Cardiac septum (tissue), 1 donor: ENCODE measurements at regions of chr1 and their contacts with region 1.

Region 1: DNA sequence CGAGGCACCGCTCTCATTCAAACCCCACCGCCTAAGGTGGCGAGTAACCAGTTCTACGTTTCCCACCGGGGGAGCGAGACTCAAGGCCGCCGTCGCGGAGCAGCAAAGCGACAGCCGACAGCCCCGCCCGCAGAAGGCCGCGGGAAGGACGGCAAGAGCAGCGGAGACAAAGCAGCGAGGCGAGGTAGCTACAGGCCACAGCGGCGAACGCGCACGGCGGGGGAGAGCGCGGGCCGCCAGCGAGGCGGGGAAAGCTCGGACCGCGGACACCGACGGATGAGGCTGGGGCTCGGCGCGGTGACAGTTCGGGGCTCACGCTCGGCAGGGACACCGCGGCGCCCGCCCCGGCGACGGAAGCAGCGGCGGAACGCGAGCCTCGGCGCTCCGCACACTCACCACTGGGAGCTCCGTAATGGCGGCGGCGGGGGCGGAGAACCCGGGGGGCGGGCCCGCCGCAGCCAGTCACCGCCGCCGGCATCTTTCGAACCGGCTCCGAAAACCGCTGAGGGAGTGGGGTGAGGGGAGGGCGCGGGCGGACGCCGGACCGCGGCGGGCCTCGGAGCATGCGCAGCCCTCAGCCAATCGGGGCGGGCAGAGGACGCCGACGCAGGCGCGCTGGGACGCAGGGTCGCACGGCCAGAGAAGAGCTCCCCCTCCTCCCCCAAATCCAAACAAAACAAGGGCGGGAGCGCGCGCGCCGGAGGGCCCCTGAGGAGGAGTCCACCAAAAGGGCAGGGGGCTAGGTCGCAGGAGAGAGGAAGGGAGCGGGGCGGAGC is 666 bp downstream of the HP1BP3 start:
- DNase-seq: peak; percentile 98

Region 2: GRCh38 chr1:20767271-20767670 is 19.2 kb before region 1 on chr1:
- intact Hi-C with region 1: no loop called
- DNase-seq: no peak

Region 3: DNA sequence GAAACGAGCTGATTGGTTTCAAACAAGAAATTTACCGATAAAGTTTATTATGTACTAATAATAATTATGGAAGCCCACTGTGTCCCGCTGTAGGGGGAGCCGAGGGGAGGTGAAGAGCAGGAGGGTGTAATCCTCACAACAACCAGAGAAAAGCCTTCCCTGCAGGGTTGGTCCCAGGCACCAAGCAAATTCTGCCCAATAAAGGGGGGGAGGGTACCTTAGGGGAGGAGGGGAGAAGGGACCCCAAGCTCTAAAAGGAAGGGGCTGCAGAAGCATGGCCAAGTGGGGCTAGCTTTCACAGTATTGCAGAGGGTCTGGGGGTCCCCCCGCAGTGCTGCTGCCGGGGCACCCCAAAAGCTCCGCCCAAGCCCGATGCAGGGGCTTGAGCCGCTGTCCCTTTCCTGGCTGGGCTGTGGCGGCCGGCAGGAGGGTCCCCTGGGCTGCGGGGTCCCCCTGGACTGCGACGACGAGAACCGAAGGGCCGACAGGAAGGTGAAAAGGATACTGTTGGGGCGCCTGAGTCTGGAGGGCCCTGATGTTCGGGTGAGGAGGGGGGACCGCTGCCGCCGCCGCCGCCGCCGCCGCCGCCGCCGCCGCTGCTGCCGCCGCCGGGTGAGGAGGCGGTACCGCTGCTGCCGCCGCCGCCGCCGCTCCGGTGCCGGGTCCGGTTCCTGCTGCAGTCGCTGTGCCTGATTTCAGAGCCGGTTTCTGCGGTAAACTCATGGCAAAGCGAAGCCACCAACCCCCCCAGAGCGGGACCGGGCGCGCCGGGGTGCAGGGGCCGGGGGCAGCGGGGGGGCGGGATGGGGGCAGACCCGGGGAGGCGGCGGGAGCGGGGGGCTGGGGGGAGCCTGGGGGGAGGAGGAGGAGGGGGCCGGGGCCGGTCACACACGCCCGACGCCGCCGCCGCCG is 389.5 kb after region 1 on chr1:
- intact Hi-C with region 1: loop called (anchors 2 kb)
- DNase-seq: no peak

Region 4: DNA sequence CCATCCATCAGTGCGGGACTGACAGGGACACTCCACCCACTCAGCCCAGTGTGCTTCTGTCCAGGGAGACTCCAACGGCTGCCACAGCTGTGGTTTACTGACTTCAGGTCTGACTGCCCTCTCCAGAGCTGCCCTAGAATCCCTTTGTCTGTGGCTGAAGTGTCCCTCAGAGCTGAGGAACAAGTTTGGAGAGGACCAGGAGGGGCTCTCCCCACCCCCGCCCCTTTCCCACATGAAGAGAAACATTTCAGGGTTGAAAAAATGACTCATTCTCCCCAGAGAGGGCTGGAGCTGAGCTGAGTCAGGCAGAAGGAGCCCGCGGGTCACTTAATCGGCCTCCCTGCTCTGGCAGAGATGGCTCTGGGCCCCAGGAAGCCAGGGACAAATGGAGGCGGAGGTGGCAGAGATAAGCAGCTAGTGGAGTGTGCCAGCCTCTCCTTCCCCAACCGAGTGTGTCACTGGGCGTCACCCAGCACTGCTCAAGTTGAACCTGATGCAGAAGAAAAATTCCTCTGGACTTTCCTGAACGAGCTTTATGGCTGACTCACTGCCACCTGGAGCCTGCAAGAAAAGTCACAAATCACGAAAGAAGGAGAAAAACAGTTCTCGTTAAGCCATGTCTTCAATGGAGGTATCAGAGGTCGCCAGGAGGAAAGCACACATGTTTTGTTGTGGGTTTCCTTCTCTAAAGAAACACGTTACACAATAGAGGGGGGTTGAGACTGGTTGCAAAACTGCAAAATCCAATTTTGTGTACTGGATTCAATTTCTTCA is 538.1 kb after region 1 on chr1:
- intact Hi-C with region 1: loop called (anchors 10 kb)
- DNase-seq: peak; percentile 91